Vagina (tissue), 2 donors: ENCODE measurements at regions of chr20 and their contacts with region 1.

Region 1: DNA sequence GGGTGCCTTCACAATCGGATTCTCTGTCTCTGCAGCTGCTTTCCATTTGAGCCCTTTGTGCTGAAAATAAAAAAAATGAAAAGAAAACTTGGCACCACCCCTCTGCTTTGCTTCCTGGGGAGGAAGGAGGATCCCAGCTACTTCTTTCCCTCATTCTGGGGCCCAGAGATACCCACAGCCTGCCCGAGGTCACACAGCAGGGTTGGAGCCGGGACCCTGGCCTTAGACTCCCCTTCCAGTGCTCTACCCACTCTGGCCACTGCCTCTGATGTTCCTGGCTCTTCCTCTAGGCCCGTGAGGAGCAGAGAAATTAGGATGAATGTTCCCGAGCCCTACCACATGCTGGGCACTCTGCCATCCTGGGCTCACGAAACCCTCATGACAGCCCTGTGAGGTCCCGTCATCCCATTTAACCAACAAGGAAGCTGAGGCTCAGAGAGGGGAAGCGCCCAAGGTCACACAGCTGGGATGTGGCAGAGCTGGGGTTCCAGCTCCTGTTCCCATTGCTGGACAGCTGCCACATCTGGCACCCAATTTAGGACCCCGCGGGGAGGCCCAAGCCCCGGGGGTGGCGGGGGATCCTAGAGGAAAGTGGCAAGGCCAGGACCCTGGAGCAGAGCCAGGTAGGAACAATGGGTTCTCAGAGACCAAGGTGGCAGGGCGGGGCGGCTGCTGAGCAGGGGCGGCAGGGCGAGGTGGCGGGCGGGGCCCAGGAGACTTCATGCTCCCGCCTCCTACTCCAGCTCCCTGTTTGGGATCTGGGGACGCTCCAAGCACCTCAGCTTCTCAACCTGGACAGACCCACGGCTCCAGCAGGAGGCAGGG is 76.6 kb downstream of the CEBPB start:
- DNase-seq: no peak
- H3K4me3 ChIP-seq: no peak overlapping the region
- H3K27ac ChIP-seq: peak overlapping the region; percentile 82
- H3K4me1 ChIP-seq: peaks cover 41% of the 10 kb centered on the region
- H3K27me3 ChIP-seq: no peaks in the 10 kb centered on the region
- CTCF ChIP-seq: no peak
- POLR2A ChIP-seq: no peak

Region 2: GRCh38 chr20:50200482-50201104 is 66.7 kb before region 1 on chr20:
- intact Hi-C with region 1: loop called (anchors 5 kb)
- DNase-seq: no peak
- H3K4me3 ChIP-seq: no peak overlapping the region
- H3K27ac ChIP-seq: no peak overlapping the region
- H3K4me1 ChIP-seq: peaks cover 7% of the 10 kb centered on the region
- H3K27me3 ChIP-seq: no peaks in the 10 kb centered on the region
- CTCF ChIP-seq: no peak
- POLR2A ChIP-seq: no peak

Region 3: GRCh38 chr20:50226093-50226974 is 40.9 kb before region 1 on chr20:
- intact Hi-C with region 1: no loop called
- DNase-seq: no peak
- H3K4me3 ChIP-seq: no peak overlapping the region
- H3K27ac ChIP-seq: peak overlapping the region; percentile 94
- H3K4me1 ChIP-seq: peaks cover 31% of the 10 kb centered on the region
- H3K27me3 ChIP-seq: no peaks in the 10 kb centered on the region
- CTCF ChIP-seq: peak in 1 of 3 experiments; percentile 20
- POLR2A ChIP-seq: no peak